ENCODE measurements at regions of chr2 and their contacts with region 1.

Region 1: DNA sequence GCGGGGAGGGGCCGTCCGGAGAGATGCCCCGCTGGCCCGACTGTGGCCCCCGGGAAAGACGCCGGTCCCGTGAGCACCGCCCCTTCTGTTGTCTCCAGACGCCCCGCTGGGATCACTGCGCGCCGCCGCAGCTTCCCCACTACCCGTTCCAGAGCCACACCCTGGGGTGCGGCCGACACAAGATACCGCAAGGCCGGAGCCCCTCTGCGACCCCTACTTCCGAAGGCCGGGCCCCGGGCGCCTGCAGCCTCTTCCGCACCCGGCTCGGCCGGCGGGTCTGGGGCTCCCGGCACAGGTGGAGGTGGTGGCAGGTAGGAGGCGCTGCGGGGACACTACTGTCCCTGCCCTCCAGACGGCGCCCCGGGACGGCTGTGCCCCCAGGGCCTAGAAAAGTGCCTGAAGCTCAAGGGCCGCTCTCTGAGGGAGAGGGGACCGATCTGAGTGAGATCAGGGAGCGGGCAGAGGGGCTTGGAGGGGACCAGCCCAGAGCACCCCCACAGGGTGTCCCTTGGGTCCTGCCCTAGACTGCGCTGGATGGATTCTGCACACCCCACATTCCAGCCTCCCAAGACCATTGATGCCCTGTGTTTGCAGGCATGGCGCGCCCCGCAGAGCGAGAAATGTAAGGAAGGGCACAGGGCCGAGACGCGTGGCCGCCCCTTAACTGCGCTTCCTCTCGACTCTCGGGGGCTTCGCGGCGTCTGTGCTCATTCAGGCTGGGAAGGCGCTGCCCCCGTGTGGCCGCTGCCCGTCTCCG is 80.0 kb downstream of the GFPT1 start:
- DNase-seq: peak; percentile 91
- CTCF ChIP-seq: peak; percentile 98

Region 2: DNA sequence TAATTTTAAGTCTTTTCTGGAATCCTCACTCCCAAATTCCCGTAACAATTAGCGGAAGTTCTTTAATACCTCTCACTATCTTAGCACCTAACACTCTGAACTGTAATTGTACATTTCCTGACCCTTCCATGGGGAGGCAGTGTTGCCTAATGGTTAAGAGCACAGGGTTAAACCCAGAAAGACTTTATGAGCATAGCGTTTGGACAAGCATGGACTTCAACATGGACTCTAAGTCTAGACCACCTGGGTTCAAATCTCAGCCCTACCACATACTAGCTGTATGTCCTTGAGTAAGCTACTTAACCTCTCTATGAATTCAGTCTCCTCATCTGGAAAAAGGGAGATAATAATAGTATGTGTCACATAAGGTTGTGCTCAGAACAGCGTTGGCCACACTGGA is 281.0 kb before region 1 on chr2:
- in situ Hi-C with region 1: loop called (anchors 25 kb)
- DNase-seq: peak; percentile 49
- CTCF ChIP-seq: peak; percentile 65

Region 3: DNA sequence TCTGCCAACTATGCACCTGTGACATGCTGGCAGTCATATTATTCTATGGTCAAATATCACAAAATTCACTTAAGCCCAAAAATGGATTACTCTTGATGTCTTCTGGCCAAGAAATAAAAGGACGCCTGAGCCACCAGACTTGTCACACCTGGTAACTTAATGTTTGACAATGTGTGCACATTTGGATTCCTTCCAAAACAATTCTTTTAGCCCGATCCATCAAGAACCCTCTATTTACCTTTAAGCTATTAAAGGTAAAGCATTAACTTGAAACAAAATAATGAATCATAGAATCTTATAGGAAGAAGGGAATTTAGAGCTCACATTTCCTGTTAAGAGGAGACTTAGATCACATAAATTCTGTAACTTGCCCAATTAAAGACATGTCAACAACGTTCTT is 176.7 kb after region 1 on chr2:
- in situ Hi-C with region 1: no loop called
- DNase-seq: no peak
- CTCF ChIP-seq: no peak

Region 4: GRCh38 chr2:69724540-69725159 is 417.6 kb after region 1 on chr2:
- in situ Hi-C with region 1: no loop called
- DNase-seq: peak; percentile 64
- CTCF ChIP-seq: peak; percentile 87

Measured in GM13977 (cell line).